HCT116 (cell line): ENCODE measurements at regions of chr10 and their contacts with region 1.

Region 1: DNA sequence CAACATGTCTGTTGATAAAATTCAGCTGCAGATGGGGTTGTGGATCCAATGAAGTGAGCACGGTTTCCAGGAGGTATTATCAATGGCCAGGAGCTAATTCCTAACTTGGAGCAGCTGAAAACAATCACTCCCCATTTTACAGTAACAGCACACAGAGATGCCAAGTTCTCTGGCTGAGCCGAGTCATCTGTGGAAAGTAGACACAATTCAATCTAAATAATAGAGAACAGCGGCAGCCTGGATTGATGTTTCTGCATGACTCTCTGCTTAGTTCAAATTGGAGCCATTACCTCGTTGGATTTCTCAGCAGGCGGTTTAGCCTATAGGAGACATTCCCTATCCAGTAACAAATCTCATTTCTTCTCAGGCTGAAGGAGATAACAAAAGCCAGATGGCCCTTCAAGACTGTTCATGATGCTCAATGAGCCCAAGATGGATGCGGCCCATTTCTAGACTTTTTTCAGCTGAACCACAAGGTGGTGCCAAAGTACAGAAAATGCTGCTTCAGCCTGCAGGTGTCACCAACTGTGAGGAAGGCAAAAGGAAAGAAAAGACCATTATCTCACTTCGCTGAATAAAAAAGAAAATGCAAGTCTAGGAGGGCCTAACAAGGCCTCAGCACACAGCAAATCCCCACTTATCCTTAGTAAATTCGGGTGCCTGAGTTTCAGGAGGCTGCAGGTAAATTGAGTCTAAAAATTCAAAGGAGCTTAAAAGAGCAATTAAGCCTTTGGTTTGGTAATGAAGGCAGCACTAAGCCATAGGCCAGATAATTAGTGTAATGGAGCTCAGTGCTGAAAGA is 83.7 kb downstream of the SLC16A9 start:
- DNase-seq: peak; percentile 48
- ATAC-seq: peak; percentile 88
- H3K4me3 ChIP-seq: no peak overlapping the region
- H3K27ac ChIP-seq: no peak overlapping the region
- H3K4me1 ChIP-seq: no peaks in the 10 kb centered on the region
- H3K27me3 ChIP-seq: no peaks in the 10 kb centered on the region
- CTCF ChIP-seq: peak; percentile 68 to 94 (median 90)
- POLR2A ChIP-seq: no peak
- RAD21 ChIP-seq: peak; percentile 96

Region 2: DNA sequence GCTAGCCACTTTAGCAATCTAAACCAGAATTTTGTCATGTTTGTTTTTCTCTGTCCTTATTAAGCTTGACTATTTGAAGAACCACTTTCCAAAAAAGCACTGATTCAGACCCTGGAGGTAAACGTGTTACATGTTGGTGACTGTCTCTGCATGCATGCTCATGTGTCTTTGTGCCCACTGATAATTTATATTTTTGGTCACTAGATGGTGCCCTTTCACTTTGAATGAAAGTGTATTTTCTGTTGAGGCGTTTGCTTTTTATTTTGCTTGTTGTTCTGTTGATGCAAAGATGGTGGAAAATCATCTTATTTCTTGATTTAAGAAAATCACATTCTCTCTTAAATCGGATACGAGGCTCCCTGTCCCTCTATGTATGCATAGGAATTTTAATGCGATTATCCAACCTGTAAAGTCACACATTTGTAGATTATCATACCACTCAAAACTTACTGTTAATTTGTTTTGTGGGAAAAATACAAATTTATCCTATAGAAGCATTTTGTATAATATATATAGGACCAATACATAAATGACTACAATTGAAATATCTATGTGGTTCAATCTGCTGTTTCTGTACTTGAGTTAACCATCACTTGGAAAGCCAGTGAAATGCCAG is 843.9 kb before region 1 on chr10:
- CTCF ChIA-PET with region 1: interaction called, 3 read pairs
- POLR2A ChIA-PET with region 1: no interaction called
- RAD21 ChIA-PET with region 1: no interaction called
- intact Hi-C with region 1: loop called (anchors 1 kb)
- DNase-seq: peak; percentile 47
- ATAC-seq: peak; percentile 82
- H3K4me3 ChIP-seq: no peak overlapping the region
- H3K27ac ChIP-seq: no peak overlapping the region
- H3K4me1 ChIP-seq: no peaks in the 10 kb centered on the region
- H3K27me3 ChIP-seq: no peaks in the 10 kb centered on the region
- CTCF ChIP-seq: peak; percentile 40 to 74 (median 60); a peak in 4 of 6 replicates
- POLR2A ChIP-seq: no peak
- RAD21 ChIP-seq: peak; percentile 79

Region 3: DNA sequence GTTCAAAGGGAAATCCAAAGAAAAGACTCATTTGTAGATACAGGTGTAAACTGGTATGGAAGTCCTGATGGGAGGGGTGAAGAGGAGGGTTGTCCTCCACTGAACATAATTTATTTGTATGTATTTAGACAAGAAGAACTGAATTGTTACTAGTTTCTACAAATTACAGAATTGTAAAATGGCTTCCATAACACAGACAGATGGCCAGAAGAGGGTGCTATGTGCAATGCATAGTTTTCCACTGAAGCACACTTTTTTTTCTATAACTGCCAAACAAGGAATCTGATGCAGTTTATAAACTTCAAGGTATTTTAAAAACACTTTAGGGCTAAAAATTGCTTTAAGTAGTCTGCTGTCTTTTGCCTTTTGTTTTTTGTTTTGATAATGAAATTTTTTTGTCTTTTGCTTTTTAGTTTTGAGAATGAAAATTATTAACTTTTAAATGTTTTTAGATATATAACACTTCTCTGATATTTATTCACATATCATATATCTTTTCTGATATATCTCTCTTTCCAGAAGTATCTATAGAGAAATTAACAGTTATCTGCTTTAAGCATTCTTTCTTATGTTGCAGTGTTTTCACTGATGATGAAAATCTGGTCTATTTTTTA is 391.0 kb before region 1 on chr10:
- CTCF ChIA-PET with region 1: interaction called, 10 read pairs
- POLR2A ChIA-PET with region 1: no interaction called
- RAD21 ChIA-PET with region 1: no interaction called
- intact Hi-C with region 1: loop called (anchors 1 kb)
- DNase-seq: peak; percentile 44
- ATAC-seq: peak; percentile 66
- H3K4me3 ChIP-seq: no peak overlapping the region
- H3K27ac ChIP-seq: no peak overlapping the region
- H3K4me1 ChIP-seq: no peaks in the 10 kb centered on the region; a peak in 1 of 4 replicates
- H3K27me3 ChIP-seq: no peaks in the 10 kb centered on the region
- CTCF ChIP-seq: peak; percentile 37 to 75 (median 70); a peak in 5 of 6 replicates
- POLR2A ChIP-seq: no peak
- RAD21 ChIP-seq: peak; percentile 52

Region 4: DNA sequence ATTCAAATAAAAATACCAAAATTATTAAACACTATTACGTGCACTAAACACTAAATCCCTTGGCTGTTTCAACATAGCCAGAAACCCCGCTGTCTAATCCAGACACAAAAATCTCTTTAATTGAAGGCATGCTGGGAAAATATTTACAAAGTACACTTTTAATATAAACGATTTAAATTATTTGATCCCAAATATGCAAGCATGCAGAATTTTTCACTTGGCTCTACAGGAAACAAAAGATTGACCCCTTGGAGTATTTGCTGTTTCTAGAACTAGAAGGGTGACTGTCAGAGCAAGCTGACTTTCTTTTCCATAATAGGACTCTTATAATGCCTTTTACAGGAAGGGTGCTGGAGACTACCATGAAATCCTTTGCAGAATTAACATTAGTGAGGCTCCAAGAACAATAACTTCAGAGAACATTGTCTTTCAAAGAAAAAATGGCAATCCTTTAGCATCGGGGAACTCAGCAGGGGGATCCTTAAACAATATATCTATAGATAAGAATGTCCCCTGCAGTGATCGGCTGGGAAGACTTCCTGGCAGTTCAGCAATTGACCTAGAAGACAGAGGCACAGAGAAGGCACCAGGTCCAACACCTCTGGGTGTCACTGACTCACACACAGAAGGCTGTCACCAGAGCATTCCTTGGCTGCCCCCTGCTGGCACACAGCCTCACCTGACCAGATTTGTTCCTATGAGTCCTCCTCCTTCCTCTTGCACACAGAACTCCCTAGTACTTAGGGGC is 183.1 kb after region 1 on chr10:
- CTCF ChIA-PET with region 1: no interaction called
- POLR2A ChIA-PET with region 1: no interaction called
- RAD21 ChIA-PET with region 1: no interaction called
- intact Hi-C with region 1: loop called (anchors 1 kb)
- DNase-seq: peak; percentile 42
- ATAC-seq: peak; percentile 96
- H3K4me3 ChIP-seq: no peak overlapping the region
- H3K27ac ChIP-seq: no peak overlapping the region
- H3K4me1 ChIP-seq: no peaks in the 10 kb centered on the region
- H3K27me3 ChIP-seq: no peaks in the 10 kb centered on the region
- CTCF ChIP-seq: peak; percentile 64 to 87 (median 80)
- POLR2A ChIP-seq: no peak
- RAD21 ChIP-seq: peak; percentile 71

Region 5: DNA sequence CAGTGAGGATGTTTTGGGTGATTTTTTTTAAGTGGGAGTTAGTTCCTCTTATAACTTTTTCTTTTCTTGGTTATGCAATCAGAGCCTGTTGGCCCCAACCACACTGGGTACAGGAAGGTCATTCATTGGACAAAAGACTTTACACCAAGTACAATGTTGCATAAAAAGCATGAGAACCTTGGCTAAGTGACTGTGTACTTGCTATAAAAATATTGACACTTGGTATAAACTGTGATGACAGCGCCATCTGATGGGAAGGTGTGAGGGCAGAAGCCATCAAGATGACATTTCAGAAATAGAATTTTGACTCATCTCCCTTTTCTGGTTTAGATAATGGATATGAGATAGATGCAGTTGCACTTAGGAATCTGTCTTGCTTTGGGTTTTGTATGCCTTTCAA is 406.8 kb after region 1 on chr10:
- CTCF ChIA-PET with region 1: interaction called, 7 read pairs
- POLR2A ChIA-PET with region 1: no interaction called
- RAD21 ChIA-PET with region 1: interaction called in 1 of 2 experiments, 4 read pairs
- intact Hi-C with region 1: loop called (anchors 1 kb)
- DNase-seq: peak; percentile 47
- ATAC-seq: peak; percentile 85
- H3K4me3 ChIP-seq: no peak overlapping the region
- H3K27ac ChIP-seq: no peak overlapping the region
- H3K4me1 ChIP-seq: no peaks in the 10 kb centered on the region
- H3K27me3 ChIP-seq: no peaks in the 10 kb centered on the region
- CTCF ChIP-seq: peak; percentile 68 to 87 (median 75)
- POLR2A ChIP-seq: no peak
- RAD21 ChIP-seq: peak; percentile 91

Region 6: DNA sequence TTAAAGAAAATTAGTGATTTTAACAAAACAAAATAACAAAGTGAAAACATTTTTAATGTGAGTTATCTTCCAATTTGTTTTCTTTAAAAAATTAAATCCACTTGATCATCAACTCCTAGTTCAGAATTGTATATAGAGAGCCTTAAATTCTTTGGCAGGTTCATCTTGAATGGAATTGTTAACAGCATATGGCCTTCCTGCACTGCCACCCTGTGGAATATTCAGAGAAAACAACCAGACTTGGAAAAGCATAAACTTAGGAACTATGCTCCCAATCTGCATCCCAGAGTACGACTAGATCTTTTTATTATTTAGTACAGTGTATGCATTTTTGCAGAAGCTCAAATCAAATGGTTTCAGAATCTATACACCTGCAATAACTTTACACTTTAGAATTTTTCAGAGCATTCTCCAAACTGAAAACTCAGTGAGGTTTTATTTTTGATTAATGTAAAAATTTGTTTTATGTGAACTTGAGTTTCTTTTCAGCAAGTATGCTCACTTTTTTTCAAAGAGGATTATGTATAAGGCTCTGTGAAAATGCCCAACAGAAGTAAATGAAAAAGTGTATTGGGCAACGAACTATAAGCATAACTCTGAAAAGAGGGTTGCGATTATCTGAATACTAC is 808.6 kb after region 1 on chr10:
- CTCF ChIA-PET with region 1: no interaction called
- POLR2A ChIA-PET with region 1: no interaction called
- RAD21 ChIA-PET with region 1: no interaction called
- intact Hi-C with region 1: loop called (anchors 5 kb)
- DNase-seq: peak; percentile 43
- ATAC-seq: peak; percentile 75
- H3K4me3 ChIP-seq: no peak overlapping the region
- H3K27ac ChIP-seq: no peak overlapping the region
- H3K4me1 ChIP-seq: no peaks in the 10 kb centered on the region
- H3K27me3 ChIP-seq: no peaks in the 10 kb centered on the region
- CTCF ChIP-seq: peak; percentile 47 to 85 (median 85)
- POLR2A ChIP-seq: no peak
- RAD21 ChIP-seq: peak; percentile 90

Region 7: GRCh38 chr10:60810809-60811182 is 1184.9 kb after region 1 on chr10:
- CTCF ChIA-PET with region 1: no interaction called
- POLR2A ChIA-PET with region 1: no interaction called
- RAD21 ChIA-PET with region 1: no interaction called
- intact Hi-C with region 1: no loop called
- DNase-seq: no peak
- ATAC-seq: no peak
- H3K4me3 ChIP-seq: no peak overlapping the region
- H3K27ac ChIP-seq: no peak overlapping the region
- H3K4me1 ChIP-seq: no peaks in the 10 kb centered on the region; a peak in 1 of 4 replicates
- H3K27me3 ChIP-seq: no peaks in the 10 kb centered on the region
- CTCF ChIP-seq: no peak
- POLR2A ChIP-seq: no peak
- RAD21 ChIP-seq: no peak